ENCODE measurements at regions of chr7 and their contacts with region 1.

Region 1: DNA sequence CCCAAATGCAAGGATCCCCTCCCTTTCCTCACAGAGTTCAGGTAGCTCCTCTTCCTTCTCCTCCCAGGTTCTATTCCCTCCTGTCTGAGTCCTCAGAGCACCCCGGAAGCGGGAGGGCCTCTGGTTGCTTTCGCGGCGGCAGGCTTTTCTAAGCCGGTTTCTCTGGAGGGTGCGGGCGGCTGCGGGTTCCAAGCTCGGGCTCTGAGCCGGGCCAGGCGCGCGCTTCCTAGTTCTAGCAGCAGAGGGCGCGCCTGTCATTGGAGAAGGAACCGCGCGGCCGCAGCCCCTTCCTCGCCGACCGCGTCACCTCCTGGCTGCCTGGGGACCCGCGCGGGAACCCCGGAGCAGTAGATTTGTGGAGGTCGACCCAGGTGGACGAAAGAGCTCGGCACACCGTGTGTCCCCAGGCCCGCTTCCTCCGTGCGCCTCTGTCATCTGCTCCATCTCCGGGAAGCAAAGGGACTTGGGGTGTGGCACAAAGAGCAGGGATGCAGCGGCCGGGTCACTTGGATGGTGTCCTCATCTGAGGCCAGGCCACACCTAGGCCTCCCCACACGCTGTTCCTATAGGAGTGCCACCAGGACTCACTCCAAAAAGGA is 389.0 kb upstream of the PODXL start:
- DNase-seq: peak in 1 of 2 donors; percentile 55
- ATAC-seq: peak; percentile 55

Region 2: DNA sequence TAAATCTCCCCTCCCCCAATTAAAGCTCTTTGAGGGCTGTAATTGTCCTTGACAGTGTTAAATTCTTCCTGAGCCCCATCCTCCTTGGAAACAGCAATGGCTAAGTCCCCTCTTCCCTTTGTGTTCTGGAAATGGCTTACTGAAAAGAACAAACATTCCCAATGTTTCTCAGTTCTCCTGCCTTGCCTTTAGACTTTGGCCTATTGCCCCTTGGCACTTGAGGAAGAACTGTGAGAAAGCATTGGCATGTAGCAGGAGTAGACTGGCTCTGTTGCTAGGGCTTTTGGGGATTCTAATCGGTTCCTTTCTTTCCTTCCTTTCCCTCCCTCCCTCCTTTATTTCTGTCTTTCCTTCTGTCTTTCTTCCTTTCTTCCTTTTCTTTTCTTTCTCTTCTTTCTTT is 74.3 kb after region 1 on chr7:
- intact Hi-C with region 1: no loop called
- DNase-seq: no peak
- ATAC-seq: peak; percentile 87

Region 3: DNA sequence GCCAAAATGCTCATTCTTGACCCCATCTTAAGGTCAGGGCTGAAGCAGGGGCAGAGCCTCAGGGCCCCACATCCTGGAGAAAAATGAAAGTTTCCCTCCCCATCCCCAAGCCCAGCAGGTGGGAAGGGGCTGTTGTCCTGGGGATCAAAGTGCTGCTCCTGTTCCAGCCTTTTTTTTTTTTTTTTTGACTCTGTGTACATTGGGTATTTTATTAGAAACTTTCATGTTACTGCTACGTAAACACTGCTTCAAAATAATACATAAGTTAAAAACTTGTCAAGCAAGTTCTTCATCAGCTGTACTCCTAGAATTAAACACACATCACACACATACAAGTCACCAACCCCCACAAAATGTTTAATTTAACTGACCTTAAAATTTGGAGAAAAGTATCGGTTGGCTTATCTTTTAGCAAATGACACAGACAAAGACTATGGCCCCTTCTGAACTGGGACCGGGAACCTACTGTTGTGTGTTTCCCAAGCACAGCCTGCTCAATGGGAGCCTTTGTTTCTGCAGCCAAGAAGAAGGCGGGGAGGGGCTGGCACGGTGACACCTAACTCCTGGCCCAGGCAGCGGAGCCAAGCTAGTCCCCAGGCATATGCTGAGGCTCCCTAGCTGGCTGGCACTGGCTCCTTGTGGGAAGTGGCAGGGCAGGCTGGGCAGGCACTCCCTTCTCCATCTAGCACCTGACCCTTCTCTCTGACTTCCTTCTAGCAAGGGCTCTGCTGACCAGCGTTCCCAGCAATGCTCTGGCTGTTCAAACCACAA is 305.7 kb after region 1 on chr7:
- intact Hi-C with region 1: loop called in 1 of 2 experiments (anchors 5 kb)
- DNase-seq: peak; percentile 85 to 94
- ATAC-seq: peak; percentile 93

Region 4: DNA sequence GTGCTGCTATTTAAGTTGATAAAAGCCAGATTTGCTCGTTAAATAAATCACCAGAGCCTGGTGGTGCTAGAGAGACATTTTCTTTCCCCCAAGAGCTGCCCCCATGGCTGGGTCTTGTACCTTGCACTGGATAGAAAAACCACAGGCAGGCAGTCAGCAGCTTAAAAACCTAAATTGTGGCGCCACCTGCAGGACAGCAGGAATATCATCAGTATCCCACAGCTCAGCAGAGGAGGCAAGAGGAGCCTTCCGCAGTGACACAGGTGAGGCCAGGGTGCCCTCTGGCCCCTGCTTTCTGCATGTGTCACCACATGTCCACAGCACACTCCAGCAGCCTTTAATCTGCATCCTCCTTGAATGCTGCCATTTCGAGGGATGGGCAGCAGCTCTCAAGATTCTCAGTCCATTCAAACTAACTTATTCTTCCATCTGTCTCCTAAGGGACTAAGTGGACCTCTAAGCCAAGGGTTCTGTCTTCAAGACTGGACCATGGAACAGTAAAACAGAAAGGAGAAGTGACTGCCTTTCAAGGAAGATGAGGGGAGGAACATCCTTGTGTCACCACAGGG is 635.4 kb after region 1 on chr7:
- intact Hi-C with region 1: loop called in 1 of 2 experiments (anchors 10 kb)
- DNase-seq: peak; percentile 56 to 68
- ATAC-seq: peak; percentile 90

Measured in left colon (tissue), 2 donors.